ENCODE measurements at regions of chrX and their contacts with region 1.

Region 1: GRCh38 chrX:134484039-134484438 is 24.1 kb downstream of the HPRT1 start:
- DNase-seq: no peak
- ATAC-seq: no peak
- H3K4me3 ChIP-seq: no peak overlapping the region
- H3K27ac ChIP-seq: no peak overlapping the region
- H3K4me1 ChIP-seq: no peaks in the 10 kb centered on the region
- H3K27me3 ChIP-seq: no peaks in the 10 kb centered on the region
- CTCF ChIP-seq: peak; percentile 35 to 67 (median 52)
- POLR2A ChIP-seq: no peak

Region 2: DNA sequence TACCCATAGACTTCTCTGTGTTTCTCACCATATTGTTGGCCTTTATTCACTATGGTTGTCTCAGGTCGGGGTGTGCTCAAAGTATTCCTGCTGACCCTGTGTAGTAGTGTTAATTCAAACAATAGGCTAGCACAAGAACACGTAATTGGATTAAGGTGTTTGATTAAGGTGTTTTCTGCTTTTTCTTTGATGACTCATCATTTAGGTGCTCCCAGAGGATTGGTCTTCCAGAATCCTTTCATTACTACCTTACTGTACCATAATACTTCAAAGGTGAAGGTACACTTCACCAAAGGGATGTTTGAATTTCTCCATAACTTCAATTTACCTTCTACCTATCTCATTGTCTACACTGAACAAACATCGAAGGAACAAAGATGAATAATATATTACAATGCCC is 368.8 kb before region 1 on chrX:
- in situ Hi-C with region 1: no loop called
- intact Hi-C with region 1: no loop called
- DNase-seq: no peak
- ATAC-seq: no peak
- H3K4me3 ChIP-seq: no peak overlapping the region
- H3K27ac ChIP-seq: no peak overlapping the region
- H3K4me1 ChIP-seq: no peaks in the 10 kb centered on the region
- H3K27me3 ChIP-seq: peaks cover 0 to 4% (median 0%) of the 10 kb centered on the region in 3 donors
- CTCF ChIP-seq: no peak
- POLR2A ChIP-seq: no peak

Region 3: GRCh38 chrX:134753718-134754008 is 269.6 kb after region 1 on chrX:
- in situ Hi-C with region 1: loop called in 3 of 4 experiments (anchors 10 to 25 kb)
- intact Hi-C with region 1: loop called (anchors 2 kb)
- DNase-seq: no peak
- ATAC-seq: no peak
- H3K4me3 ChIP-seq: no peak overlapping the region
- H3K27ac ChIP-seq: no peak overlapping the region
- H3K4me1 ChIP-seq: no peaks in the 10 kb centered on the region
- H3K27me3 ChIP-seq: no peaks in the 10 kb centered on the region
- CTCF ChIP-seq: peak in 3 of 5 experiments; percentile 14 to 43 (median 22)
- POLR2A ChIP-seq: no peak

Region 4: DNA sequence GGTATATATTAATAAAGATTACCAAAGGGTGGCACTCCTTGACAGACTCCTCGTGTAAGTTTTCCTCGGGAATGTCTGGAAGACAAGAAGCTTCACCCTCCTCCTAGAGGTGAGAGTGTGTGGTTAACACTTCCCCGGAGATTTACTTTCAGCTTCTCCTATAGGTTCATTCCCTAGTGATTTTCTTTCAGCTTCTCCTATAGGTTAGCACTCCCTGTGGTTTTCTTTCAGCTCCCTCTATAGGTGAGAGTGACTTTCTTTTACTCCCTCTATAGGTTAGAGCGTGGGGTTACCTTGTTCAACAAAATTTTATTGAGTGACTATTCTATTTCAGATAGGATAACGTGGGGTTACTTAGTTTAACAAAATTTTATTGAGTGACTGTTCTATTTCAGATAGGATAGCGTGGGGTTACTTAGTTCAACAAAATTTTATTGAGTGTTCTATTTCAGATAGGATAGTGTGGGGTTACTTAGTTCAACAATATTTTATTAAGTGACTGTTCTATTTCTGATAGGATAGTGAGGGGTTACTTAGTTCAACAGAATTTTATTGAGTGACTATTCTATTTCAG is 280.3 kb after region 1 on chrX:
- in situ Hi-C with region 1: loop called in 3 of 4 experiments (anchors 10 to 25 kb)
- intact Hi-C with region 1: no loop called
- DNase-seq: no peak
- ATAC-seq: no peak
- H3K4me3 ChIP-seq: no peak overlapping the region
- H3K27ac ChIP-seq: no peak overlapping the region
- H3K4me1 ChIP-seq: no peaks in the 10 kb centered on the region
- H3K27me3 ChIP-seq: no peaks in the 10 kb centered on the region
- CTCF ChIP-seq: no peak
- POLR2A ChIP-seq: no peak